GM13977 (cell line): ENCODE measurements at regions of chr4 and their contacts with region 1.

Region 1: DNA sequence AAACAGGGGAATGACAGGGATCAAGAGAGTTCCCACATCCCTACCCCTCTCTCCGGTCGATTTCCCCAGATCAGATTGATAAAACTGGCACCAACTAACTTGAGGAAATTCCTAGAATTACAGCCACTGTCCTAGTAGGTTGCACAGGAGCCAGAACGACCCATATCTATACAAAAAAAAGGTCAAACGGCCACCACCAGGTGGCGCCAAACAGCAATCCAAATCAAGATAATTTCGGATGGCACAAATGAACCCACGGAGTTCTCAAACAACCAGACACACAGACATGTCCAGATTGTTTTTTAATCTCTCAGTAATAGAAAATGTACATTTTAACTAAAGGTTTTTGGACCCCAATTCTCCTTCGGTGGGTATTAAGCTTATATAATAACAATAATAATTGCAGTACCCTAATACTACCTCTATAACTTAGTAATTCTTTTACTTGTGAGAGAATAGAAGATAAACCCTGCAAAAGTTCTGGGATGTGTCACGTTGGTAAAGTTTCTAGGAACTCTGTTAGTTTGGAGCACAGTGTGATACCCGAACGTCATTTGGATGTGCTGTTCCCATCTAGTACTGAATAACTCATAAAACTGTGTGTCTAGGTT is 212.6 kb downstream of the SPOCK3 start:
- DNase-seq: no peak
- CTCF ChIP-seq: peak; percentile 79

Region 2: DNA sequence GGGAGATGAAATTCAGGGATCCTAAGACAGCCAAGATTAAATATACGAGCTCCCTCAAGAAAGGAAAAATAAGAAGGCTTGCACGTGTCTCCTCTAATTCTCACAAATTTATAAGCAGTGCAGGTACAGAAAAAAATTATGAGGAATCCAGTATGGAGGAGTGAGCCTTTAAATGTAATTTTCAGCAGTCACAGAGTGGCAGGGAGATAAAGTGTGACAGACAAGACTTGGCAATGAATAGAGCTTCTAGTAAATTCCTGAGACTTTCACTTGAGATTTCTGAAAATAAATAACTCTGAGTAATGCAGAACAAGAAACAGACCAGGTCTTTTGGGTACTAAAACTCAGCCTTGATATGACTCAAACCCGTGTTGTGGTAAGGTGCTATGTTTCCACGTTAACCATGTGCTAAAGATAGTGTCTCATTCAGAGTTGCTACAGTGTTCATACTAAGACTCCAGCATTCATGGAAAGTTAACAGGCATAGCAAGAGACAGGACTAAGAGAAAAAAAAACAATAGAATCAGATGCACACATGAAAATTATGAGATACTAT is 92.8 kb after region 1 on chr4:
- in situ Hi-C with region 1: no loop called
- DNase-seq: no peak
- CTCF ChIP-seq: no peak

Region 3: GRCh38 chr4:167150587-167150986 is 128.9 kb after region 1 on chr4:
- in situ Hi-C with region 1: no loop called
- DNase-seq: no peak
- CTCF ChIP-seq: no peak

Region 4: GRCh38 chr4:167290678-167291077 is 269.0 kb after region 1 on chr4:
- in situ Hi-C with region 1: loop called (anchors 25 kb)
- DNase-seq: no peak
- CTCF ChIP-seq: peak; percentile 35